Lower leg skin (tissue), 4 donors: ENCODE measurements at regions of chr11 and their contacts with region 1.

Region 1: GRCh38 chr11:118198370-118198769 is 21.9 kb upstream of the SCN2B start:
- DNase-seq: peak; percentile 55 to 96
- H3K4me3 ChIP-seq: no peak overlapping the region
- CTCF ChIP-seq: no peak
- POLR2A ChIP-seq: no peak

Region 2: DNA sequence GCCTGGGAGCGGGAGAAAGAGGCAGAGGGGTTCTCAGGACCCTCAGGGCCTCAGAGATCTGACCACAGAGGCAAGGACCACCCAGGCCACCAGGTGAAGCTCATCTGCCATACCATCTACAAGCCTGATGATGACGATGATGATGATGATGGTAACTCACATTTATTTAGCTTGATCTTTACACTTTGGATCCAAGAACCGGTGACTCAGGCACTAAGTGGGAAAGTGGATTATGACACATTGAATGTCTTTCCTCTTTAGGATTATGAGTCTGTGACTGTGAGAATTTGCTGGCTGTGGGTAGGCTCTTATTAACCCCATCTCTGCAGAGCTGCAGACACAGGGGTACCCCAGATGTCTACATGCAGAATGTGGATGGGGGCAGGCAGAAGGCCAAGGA is 511.7 kb before region 1 on chr11:
- intact Hi-C with region 1: no loop called
- DNase-seq: no peak
- H3K4me3 ChIP-seq: no peak overlapping the region
- CTCF ChIP-seq: no peak
- POLR2A ChIP-seq: no peak

Region 3: GRCh38 chr11:117843666-117844484 is 354.5 kb before region 1 on chr11:
- intact Hi-C with region 1: no loop called
- DNase-seq: peak; percentile 74 to 97
- H3K4me3 ChIP-seq: no peak overlapping the region
- CTCF ChIP-seq: peak in 1 of 3 donors; percentile 90
- POLR2A ChIP-seq: no peak

Region 4: DNA sequence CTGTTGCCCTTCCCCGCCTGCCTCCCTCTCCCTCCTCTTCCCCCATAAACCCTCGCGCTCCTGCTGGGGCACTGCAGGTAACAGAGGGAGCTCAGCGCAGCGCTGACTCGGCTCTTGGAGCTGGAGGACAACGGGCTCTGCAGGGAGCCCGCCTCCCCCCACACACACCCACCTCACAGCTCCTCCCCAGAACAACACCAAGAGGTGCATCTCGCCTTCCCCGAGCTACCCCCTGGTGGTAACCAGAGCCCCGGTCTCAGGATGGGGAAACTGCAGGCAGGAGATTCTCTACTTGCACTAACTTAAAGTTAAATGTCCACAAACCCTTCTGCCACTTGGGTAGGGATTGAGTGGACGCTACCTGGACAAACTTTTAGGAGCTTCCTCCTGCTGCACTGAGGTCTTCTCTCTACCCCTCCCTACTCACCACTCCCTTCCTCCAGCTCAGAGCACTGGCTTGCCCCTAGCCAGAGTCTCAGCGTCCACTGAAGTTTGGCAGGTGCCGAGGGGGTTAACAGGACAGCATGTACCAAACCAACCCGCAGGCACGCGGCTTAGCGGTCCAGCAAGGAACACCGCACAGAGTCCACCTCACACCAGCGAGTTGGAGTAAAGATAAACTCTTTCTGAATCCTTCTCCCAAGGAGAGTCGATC is 41.7 kb before region 1 on chr11:
- intact Hi-C with region 1: no loop called
- DNase-seq: no peak
- H3K4me3 ChIP-seq: no peak overlapping the region
- CTCF ChIP-seq: no peak
- POLR2A ChIP-seq: no peak

Region 5: DNA sequence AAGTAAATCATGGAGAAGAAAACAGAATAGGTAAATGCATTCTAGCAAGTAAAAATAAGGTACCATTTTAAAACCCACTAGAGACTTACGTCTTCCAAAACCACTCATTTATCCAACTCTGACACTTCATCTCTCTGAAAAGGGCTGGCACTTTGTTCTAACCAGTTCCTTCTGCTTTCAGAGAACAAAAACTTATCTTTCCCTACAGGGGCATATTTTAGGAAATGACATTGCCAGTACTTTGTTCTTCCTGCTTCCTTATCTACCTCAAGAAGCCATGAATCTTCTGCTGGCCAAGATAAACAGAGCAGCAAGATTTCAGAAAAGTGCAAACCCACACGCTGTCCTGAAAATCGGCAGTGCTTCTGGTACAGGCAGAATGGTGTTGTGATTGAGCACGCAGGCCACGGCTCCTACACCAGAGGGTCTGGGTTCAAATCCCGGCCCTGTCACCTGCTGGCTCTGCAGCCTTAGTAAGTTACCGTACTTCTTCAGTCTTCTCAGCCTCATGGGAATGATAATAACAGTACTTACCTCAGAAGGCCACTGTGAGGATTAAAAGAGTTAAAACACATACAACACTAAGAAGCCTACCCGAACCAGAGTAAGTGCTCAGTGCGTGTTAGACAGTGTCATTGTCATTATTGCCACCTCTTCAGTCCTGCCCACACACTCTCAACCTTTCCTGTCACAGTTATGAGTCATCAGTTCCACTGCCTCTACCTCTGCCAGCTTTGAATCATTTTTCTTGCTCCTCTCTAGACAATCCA is 42.8 kb after region 1 on chr11:
- intact Hi-C with region 1: no loop called
- DNase-seq: no peak
- H3K4me3 ChIP-seq: no peak overlapping the region
- CTCF ChIP-seq: no peak
- POLR2A ChIP-seq: no peak

Region 6: DNA sequence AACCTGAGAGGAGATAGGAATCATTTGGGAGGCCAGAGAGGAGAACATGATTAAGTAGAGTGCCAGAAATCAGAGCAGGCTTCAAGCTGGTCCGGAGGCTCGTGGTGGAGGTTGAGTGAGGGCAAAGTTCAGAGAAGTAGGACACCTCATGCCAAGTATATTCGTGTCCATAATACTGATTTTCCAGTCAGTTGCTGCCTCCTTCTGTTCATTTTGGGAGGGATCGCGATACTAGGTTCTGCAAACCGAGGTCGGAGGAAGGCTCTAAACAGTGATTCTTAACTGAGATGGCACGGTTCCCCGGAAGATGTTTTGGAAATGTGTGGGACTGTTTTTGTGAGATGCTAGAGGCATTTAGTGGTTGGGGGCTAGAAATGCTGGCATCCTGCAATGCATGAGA is 92.6 kb after region 1 on chr11:
- intact Hi-C with region 1: loop called (anchors 10 kb)
- DNase-seq: peak in 1 of 2 donors; percentile 46
- H3K4me3 ChIP-seq: no peak overlapping the region
- CTCF ChIP-seq: no peak
- POLR2A ChIP-seq: no peak